ENCODE measurements at regions of chr10 and their contacts with region 1.

Region 1: GRCh38 chr10:71212318-71213126 is at the start of gene UNC5B:
- DNase-seq: peak; percentile 45
- H3K4me3 Mint-ChIP-seq: peak within 1 kb of the TSS; percentile 46
- H3K27ac Mint-ChIP-seq: no peak within 1 kb of the TSS
- H3K4me1 Mint-ChIP-seq: peaks cover 10% of the 10 kb centered on the region
- H3K27me3 Mint-ChIP-seq: peaks cover 60% of the 10 kb centered on the region
- total RNA-seq, gene UNC5B: 0.05 TPM

Region 2: GRCh38 chr10:69573056-69573806 is 1639.3 kb before region 1 on chr10 and contains the start of gene NEUROG3:
- CTCF ChIA-PET with region 1: no interaction called
- intact Hi-C with region 1: loop called (anchors 10 kb)
- DNase-seq: no peak
- H3K4me3 Mint-ChIP-seq: peak within 1 kb of the TSS; percentile 65
- H3K27ac Mint-ChIP-seq: no peak within 1 kb of the TSS
- H3K4me1 Mint-ChIP-seq: peaks cover 29% of the 10 kb centered on the region
- H3K27me3 Mint-ChIP-seq: peaks cover 76% of the 10 kb centered on the region
- total RNA-seq, gene NEUROG3: not detected

Region 3: GRCh38 chr10:70982443-70982842 is 230.1 kb before region 1 on chr10:
- CTCF ChIA-PET with region 1: no interaction called
- intact Hi-C with region 1: no loop called
- DNase-seq: no peak
- H3K4me3 Mint-ChIP-seq: no peak overlapping the region
- H3K27ac Mint-ChIP-seq: no peak overlapping the region
- H3K4me1 Mint-ChIP-seq: peaks cover 8% of the 10 kb centered on the region
- H3K27me3 Mint-ChIP-seq: no peaks in the 10 kb centered on the region

Region 4: DNA sequence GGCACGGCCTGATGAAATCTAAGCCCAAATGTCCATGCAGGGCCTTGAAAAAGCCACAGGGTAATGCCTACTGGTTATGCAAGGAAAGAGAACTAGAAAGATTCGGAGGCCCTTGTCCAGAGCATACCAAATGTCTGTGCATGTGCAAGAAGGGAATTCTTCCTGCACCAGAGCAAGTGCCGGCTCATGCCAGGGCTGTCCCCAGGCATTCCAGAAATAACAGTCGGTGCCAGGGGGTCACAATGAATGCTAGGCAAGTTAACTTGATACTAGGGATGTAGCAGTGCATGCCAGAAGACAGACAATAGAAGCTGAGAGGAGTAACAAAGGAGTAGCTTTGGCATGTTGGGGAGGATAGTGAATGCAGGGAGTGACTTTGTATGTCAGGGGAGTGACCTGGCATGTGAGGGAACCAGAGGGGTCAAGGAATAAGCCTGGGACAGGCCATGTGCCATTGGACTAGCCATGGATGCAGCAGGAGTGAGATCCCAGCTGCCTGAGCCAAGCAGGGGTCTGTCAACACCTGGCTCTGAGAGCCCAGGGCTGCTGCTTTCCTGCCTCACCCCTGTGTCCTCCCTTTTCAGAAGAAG is 119.6 kb before region 1 on chr10:
- CTCF ChIA-PET with region 1: no interaction called
- intact Hi-C with region 1: loop called (anchors 10 kb)
- DNase-seq: no peak
- H3K4me3 Mint-ChIP-seq: no peak overlapping the region
- H3K27ac Mint-ChIP-seq: no peak overlapping the region
- H3K4me1 Mint-ChIP-seq: peaks cover 12% of the 10 kb centered on the region
- H3K27me3 Mint-ChIP-seq: peaks cover 18% of the 10 kb centered on the region

Measured in activated naive CD4-positive, alpha-beta T cell treated with anti-CD3 and anti-CD28 coated beads for 36 hours (primary cell).